ENCODE measurements at regions of chr2 and their contacts with region 1.

Region 1: GRCh38 chr2:9205963-9206948 is at the start of gene ASAP2:
- DNase-seq: peak in 1 of 2 donors; percentile 82
- H3K4me3 ChIP-seq: peak within 1 kb of the TSS; percentile 79 to 81
- H3K27ac ChIP-seq: peak within 1 kb of the TSS; percentile 95 to 98
- H3K4me1 ChIP-seq: peaks cover 0 to 18% of the 10 kb centered on the region in 2 donors
- H3K27me3 ChIP-seq: no peaks in the 10 kb centered on the region
- CTCF ChIP-seq: peak; percentile 54 to 85 (median 81)
- total RNA-seq, gene ASAP2: 56.9 TPM

Region 2: DNA sequence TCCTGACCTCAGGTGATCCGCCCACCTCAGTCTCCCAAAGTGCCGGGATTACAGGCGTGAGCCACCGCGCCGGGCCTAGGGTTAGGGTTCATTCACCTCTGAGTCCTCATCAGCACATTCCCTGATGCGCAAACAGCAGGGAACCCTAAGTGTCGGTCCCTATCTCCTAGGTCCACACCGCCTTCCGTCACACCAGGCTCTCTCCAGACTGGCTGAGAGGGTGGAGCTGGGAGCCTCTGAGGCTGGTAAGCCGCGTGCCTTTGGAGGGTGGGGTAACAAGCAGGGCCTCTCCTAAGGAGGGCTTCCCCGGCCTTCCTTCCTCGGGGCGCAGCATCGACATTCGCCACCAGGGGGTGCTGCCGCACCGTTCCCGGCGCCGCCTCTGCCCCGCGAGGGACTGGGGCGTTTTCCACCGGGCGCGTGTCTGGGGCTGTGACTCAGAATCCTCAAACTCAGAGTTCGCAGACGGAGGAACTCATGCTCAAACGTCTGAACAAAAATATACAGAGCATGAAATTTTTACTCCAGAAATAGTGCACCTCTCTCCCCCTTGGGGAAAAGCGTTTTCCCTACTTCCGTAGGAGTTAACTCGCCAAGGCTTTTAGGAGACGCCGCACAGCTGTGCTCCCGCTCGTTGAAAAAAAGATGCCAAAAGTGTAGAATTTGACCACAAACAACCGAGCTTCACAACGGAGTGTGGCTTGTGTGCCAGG is 63.5 kb before region 1 on chr2:
- intact Hi-C with region 1: loop called (anchors 2 kb)
- DNase-seq: peak; percentile 56 to 95
- H3K4me3 ChIP-seq: peak overlapping the region; percentile 2 to 38
- H3K27ac ChIP-seq: peak overlapping the region; percentile 74 to 82
- H3K4me1 ChIP-seq: peaks cover 0 to 14% of the 10 kb centered on the region in 2 donors
- H3K27me3 ChIP-seq: no peaks in the 10 kb centered on the region
- CTCF ChIP-seq: peak; percentile 98 to 99 (median 98)

Region 3: DNA sequence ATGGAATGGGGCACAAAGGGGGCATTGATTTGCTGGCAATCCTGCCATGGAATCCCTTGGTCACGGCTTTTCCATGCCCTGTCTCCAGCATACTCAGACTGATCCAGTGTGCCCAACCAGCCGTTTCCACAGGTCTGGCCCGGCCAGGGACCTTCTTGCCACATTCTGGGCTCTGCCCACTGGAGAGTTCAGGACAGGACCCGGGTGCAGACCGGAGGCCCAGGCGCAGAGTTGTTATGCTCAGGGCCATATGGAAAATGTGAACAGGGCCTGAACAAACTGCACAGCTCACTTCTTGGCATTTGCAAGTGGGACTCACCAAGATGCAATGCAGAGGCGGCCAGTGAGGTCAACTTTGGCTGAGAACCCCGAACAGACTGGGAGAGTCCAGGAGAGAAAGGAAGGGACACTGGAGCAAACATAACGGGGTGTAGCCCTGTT is 15.2 kb before region 1 on chr2:
- intact Hi-C with region 1: loop called (anchors 1 kb)
- DNase-seq: peak; percentile 84 to 99
- H3K4me3 ChIP-seq: peak overlapping the region in 1 of 2 donors; percentile 10
- H3K27ac ChIP-seq: peak overlapping the region; percentile 85 to 86
- H3K4me1 ChIP-seq: peaks cover 13 to 60% of the 10 kb centered on the region in 2 donors
- H3K27me3 ChIP-seq: no peaks in the 10 kb centered on the region
- CTCF ChIP-seq: no peak

Region 4: DNA sequence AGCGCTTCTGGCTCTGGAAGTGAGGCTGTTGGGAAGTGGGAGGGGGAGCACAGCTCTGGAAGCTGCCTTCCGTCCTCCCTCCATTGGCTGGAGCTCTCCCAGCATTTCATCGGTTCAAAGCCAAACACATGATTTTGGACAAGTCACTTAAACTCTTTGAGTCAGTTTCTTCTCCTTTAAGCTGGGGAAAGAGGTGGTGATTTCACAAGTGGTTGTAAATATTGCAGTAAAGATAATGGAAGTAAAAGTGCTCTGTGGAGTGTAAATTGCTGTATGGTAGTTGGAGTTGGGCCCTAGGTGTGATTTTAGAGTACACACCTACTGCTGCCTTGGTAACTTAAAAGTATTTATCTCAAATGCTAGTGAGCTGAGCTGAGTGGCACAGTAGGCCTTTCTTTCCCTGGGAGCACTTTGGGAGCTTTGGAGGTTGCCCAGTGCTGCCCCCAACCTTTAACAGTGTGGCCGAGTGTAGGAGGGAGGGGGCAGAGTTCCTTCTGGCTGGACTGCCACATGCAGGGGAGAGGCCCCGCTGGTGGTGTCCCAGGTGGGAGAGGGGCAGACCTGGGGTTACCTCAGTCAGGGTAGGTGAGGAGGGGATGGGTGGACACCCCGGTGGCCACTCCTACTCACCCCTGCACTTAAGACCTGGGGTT is 55.1 kb after region 1 on chr2:
- intact Hi-C with region 1: loop called (anchors 2 kb)
- DNase-seq: peak in 1 of 2 donors; percentile 78
- H3K4me3 ChIP-seq: no peak overlapping the region
- H3K27ac ChIP-seq: peak overlapping the region; percentile 85
- H3K4me1 ChIP-seq: peaks cover 39 to 82% of the 10 kb centered on the region in 2 donors
- H3K27me3 ChIP-seq: no peaks in the 10 kb centered on the region
- CTCF ChIP-seq: peak in 1 of 3 experiments; percentile 5

Region 5: DNA sequence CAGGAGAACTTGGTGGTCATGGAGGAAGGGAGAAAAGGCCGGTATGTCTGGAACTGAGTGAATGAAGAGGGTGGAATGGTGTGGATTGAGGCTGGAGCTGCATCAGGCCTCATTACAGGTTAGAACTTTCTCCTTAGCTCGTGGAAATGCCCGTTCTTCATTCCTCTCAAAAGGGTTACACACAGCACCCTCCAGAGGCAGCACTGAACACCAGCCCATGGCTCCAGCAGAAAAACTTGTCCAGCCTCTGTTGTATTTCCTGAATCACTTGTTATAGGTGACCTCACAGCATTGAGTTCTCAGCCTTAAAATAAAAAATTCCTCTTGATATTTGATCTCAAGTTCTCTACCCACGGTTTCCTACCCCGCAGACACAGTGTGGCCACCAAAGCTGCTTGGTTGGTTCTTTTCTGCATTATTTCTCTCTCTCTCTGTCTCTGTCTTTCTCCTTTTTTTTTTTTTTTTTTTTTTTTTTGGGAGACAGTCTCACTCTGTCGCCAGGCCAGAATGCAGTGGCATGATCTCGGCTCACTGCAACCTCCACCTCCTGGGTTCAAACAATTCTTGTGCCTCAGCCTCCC is 127.4 kb after region 1 on chr2:
- intact Hi-C with region 1: loop called (anchors 1 kb)
- DNase-seq: peak; percentile 26 to 87
- H3K4me3 ChIP-seq: no peak overlapping the region
- H3K27ac ChIP-seq: peak overlapping the region; percentile 58 to 63
- H3K4me1 ChIP-seq: peaks cover 0 to 16% of the 10 kb centered on the region in 2 donors
- H3K27me3 ChIP-seq: no peaks in the 10 kb centered on the region
- CTCF ChIP-seq: peak; percentile 72 to 76 (median 74)

Region 6: DNA sequence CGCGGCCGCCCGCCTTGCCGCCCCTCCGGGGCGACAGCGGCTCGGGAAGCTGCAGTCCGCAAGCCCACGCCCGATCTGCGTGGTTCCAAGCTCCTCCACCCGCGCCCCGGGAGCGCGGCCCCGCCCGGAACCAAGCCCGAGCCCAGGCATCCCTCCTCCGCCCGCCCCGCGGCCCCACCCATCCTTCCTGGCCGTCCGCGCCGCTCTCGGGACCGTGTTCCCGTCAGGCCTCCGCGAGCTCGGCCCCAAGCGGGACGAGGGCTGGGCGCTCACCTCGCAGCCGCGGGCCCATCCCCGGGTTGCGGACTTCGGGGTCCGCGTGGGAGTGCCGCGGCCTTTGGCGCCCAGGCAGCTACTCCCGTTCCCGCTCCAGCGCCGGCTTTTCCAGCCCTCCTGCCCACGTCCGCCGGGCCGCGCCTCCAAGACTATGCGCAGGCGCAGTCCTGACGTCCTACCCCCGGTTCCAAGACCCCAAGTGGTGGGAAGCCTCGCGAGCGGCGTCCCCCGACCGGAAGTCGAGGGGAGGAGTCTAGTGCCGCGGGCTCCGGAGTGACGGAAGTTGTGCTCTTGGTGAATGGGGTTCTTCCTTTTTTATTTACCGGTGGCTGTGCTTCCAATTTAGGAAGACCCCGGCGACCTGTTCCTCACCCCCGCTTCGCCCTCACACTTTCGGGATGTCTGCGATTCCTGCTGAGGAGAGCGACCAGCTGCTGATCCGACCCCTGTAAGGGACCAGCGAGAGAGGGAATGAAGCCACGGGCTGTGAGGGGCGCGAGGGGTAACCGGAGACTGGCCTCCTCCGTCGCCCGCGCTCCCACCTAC is 217.1 kb after region 1 on chr2 and contains the starts of genes CPSF3 and ITGB1BP1:
- intact Hi-C with region 1: loop called (anchors 5 kb)
- DNase-seq: peak; percentile 85 to 98
- H3K4me3 ChIP-seq: peak within 1 kb of the TSS; percentile 83 to 93
- H3K27ac ChIP-seq: peak within 1 kb of the TSS; percentile 91 to 94
- H3K4me1 ChIP-seq: peaks cover 7 to 33% of the 10 kb centered on the region in 2 donors
- H3K27me3 ChIP-seq: no peaks in the 10 kb centered on the region
- CTCF ChIP-seq: no peak
- total RNA-seq, gene CPSF3: 5.3 TPM
- total RNA-seq, gene ITGB1BP1: 25.4 TPM